ENCODE measurements at regions of chr7 and their contacts with region 1.

Region 1: DNA sequence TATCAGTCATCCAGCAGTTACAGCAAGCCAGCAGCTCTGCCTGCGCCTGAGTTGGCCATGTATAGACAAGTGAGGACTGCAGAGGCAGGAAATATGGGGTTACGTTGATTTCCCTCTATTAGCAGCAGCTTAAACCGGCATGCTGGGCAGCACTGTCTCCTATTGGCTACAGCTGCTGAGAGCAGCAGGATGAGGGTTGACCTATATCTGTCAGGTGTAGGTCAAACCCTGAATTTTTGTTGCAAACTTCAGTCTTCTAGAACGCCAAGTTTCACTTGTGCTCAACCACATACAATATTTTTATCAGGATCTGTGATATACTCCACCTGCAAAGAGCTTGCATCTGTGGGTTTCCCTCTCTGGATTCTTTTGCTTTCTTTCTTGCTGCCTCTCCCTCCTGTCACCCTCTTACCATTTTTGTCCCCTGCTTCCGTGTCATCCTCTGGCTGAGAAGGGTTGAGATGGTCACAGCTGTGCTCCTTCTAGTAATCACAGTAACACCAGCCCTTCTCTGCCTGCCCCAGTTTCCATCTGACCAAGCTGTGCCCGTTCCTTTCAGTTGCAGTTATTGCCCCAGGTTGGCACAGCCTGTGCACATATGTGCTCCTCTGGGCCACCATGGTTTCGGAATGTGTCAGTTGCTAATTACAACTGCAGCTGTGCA is 23.8 kb upstream of the GLCCI1 start:
- DNase-seq: peak; percentile 76
- H3K4me3 Mint-ChIP-seq: peak overlapping the region; percentile 71
- H3K27ac Mint-ChIP-seq: peak overlapping the region; percentile 96
- H3K4me1 Mint-ChIP-seq: peaks cover 34% of the 10 kb centered on the region
- H3K27me3 Mint-ChIP-seq: no peaks in the 10 kb centered on the region

Region 2: DNA sequence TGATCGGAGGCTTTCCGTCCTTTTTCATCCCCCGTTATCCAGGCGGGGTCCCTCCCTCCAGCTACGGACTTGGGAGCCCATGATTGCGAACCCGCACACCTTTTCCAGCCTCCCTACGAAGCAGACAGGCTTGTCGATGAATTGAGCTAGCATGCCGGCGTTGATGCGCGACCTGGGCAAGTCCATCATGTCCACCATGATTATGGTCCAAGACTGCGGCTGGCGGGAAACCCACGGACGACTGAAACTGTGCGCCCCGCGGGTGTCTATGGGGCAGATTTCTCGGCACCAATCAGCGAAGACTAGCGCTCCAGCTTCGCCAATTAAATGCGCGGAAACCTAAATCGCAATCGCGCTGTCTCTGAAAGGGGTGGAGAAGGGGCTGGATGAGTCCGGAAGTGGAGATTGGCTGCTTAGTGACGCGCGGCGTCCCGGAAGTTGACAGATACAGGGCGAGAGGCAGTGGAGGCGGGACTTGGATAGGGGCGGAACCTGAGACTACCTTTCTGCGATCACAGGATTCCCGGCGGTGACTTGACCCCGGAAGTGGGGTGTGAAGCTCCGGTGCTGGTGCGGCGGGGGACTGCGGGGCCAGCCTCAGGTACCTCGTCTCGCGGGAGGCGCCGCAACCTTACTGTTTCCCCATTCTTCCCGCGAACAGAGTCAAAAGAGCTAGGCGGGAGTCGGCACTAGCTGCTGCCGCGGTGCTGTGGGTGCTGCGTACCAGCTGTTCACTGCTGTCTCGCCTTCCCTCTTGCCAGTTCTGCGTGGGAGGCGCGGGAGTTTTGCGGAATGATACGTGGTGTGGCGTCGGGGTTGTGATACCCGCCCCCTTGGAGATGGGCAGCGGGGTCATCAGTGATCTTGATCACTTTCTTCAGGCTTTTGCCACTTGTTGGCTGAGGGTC is 304.3 kb before region 1 on chr7 and contains the start of gene UMAD1:
- CTCF ChIA-PET with region 1: no interaction called
- POLR2A ChIA-PET with region 1: interaction called, 18 read pairs
- DNase-seq: peak; percentile 99
- H3K4me3 Mint-ChIP-seq: peak within 1 kb of the TSS; percentile 90
- H3K27ac Mint-ChIP-seq: peak within 1 kb of the TSS; percentile 90
- H3K4me1 Mint-ChIP-seq: peaks cover 36% of the 10 kb centered on the region
- H3K27me3 Mint-ChIP-seq: no peaks in the 10 kb centered on the region
- total RNA-seq, gene UMAD1: 16.1 to 16.7 TPM

Region 3: GRCh38 chr7:7920481-7920880 is 24.3 kb before region 1 on chr7:
- CTCF ChIA-PET with region 1: interaction called, 5 read pairs
- POLR2A ChIA-PET with region 1: interaction called, 15 read pairs
- DNase-seq: peak; percentile 21
- H3K4me3 Mint-ChIP-seq: peak overlapping the region; percentile 21
- H3K27ac Mint-ChIP-seq: no peak overlapping the region
- H3K4me1 Mint-ChIP-seq: peaks cover 27% of the 10 kb centered on the region
- H3K27me3 Mint-ChIP-seq: no peaks in the 10 kb centered on the region

Region 4: DNA sequence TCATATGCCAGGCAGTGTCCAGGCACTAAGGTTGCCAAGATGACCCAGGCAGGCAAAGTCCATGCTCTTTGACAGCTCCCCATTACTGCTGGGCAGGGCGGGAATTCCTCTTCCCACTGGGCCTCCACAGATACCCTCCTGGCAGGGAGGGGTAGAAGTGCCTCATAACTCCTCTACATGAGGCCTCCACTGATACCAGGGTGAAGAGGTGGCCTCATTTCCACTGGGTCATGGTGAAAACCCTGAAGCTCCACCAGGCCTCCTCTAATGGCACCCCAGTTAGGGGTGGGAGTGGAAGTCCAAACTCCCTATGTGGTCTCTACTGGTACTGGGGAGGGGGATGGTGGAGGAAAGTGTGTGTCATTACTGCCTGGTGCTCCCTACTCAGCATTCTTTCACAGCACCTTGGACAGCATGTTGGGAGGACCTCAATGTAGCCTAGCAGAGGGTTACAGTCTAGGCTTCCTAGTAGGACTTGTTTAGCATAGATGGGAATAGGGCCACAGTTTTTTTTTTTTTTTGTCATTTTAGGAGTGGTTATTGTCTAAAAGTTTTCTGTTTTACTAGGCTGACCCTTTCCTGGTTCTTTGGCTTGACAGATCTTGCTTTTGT is 10.7 kb before region 1 on chr7:
- CTCF ChIA-PET with region 1: interaction called, 5 read pairs
- POLR2A ChIA-PET with region 1: interaction called, 13 read pairs
- DNase-seq: no peak
- H3K4me3 Mint-ChIP-seq: no peak overlapping the region
- H3K27ac Mint-ChIP-seq: no peak overlapping the region
- H3K4me1 Mint-ChIP-seq: peaks cover 12% of the 10 kb centered on the region
- H3K27me3 Mint-ChIP-seq: no peaks in the 10 kb centered on the region

Region 5: DNA sequence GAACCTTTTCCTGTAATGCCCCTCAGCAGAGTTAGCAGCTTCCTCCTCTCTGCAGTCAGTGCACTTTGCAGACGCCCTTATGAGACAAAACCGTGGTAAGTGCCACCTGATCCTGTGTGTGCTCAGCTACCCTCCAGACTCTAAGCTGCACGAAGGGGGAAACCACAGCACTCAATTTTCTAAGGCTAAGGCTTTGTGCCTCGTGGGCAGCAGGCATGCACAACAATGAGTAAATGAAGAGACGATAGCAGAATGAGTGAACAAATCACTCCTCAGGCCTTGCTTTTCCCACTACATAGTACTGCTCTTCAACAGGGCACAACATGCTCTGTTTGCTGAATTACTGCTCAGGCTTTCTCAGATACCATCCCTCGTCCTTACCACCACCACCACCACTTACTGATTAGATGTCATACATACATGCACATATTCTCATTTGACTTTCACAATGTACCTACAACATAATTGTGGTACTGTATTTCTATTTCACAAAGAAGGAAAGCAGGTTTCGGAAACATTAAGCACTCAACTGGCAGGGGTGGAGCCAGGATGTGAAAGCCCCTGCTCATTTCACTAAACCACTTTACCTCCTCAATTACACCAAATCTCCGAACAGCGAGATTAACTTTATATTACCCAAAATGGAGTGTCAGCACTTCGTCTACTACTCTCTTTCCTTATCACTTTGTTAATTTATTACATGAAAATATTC is 231.8 kb after region 1 on chr7:
- CTCF ChIA-PET with region 1: no interaction called
- POLR2A ChIA-PET with region 1: interaction called, 10 read pairs
- DNase-seq: peak; percentile 78
- H3K4me3 Mint-ChIP-seq: peak overlapping the region; percentile 58
- H3K27ac Mint-ChIP-seq: peak overlapping the region; percentile 99
- H3K4me1 Mint-ChIP-seq: peaks cover 51% of the 10 kb centered on the region
- H3K27me3 Mint-ChIP-seq: no peaks in the 10 kb centered on the region